ENCODE measurements at regions of chr2 and their contacts with region 1.

Region 1: GRCh38 chr2:10124538-10125045 is 2.1 kb downstream of the RRM2 start:
- DNase-seq: no peak
- ATAC-seq: no peak

Region 2: DNA sequence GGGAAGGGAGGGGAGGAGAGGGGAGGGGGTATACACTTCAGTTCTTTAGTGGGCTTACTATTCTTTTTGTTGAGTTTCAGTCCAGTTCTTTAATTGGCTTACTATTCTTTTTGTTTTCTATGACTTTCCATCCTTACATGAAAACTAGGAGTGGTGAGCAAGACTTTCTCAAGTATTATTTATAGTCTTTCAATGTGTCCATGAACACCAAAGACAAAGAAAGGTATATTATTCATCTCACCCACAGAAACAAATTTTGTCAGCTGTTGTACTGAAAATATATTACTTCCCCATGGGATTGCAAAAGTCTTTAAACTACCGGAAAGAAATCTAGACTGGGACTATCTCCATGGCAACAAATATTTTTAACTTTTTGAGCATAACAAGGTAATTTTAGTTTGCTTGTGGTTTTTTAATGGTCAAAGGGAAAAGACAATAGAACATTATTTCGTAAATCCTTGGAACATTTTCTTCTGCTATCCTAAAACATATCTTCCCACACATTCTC is 586.5 kb before region 1 on chr2:
- intact Hi-C with region 1: no loop called
- DNase-seq: no peak
- ATAC-seq: peak; percentile 57

Region 3: DNA sequence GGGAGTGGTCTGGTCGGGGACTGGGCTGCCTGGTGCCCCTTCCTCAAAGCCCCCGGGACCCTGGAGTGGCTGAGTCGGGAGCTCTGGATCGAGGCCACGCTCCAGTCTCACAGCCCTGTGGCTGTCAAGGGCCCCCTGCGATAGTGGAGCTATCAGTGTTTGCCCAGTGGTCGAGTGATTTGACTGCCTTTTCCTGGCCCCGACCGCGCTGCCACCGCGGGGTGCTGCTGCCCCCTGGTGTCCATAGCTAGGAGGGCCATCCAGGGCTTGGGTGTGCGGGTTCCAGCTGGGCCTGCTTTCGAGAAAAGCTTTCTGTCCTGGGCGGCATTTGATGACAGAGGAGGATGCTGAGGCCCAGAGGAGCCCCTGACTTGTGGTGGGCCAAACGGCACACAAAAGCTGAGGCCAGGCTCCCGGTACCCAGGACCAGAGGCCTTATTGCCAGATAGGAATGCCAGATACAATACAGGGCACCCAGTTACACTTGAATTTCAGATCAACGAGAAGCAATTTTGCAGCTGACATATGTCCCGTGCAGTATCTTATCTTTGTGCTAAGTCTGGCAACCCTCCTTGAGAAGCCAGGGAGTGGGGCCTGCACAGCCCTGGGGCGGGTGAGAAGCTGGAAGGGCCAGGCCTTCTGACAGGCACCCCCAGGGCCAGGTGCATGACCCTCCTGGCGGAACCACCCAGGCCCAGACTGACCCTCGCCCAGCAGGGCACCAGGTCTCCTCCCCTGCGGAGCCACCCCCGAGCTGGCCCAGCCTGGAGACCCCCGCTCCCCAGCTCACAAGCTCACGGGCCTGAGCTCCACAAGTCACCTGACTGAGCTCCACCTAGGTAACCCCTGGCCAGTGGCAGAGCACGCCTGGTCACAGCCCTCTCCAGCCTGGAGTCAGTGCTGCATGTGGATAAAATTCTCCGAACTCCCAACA is 310.6 kb after region 1 on chr2:
- intact Hi-C with region 1: loop called (anchors 2 kb)
- DNase-seq: peak; percentile 85
- ATAC-seq: peak; percentile 86

Region 4: DNA sequence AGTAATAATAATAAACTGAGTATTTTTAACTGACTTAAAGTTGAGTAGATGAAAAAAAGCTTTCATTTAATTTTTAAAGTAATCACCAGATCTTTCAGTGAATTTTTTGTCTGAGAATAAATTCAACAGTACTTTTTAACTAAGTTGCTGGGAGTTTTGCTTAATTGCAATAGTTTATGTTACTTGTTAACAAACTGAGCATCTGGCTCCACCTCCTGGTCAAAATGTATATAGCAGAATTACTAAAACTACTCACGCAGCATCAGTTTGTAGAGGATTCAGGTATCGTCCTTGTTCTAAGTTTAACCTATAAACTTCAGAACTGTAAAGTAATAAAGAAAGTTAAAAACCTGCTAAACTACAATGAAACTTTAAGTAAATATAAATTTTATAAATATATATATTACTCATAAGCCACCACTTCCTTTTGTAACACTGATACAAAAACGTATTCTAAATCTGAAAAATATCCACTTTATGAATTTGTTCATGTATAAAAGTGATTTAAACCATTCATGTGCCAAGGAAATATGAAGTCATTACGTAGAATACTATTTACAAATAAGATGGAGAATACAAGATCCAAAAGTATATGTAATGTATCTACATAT is 543.9 kb after region 1 on chr2:
- intact Hi-C with region 1: no loop called
- DNase-seq: no peak
- ATAC-seq: no peak